ENCODE measurements at regions of chrX and their contacts with region 1.

Region 1: DNA sequence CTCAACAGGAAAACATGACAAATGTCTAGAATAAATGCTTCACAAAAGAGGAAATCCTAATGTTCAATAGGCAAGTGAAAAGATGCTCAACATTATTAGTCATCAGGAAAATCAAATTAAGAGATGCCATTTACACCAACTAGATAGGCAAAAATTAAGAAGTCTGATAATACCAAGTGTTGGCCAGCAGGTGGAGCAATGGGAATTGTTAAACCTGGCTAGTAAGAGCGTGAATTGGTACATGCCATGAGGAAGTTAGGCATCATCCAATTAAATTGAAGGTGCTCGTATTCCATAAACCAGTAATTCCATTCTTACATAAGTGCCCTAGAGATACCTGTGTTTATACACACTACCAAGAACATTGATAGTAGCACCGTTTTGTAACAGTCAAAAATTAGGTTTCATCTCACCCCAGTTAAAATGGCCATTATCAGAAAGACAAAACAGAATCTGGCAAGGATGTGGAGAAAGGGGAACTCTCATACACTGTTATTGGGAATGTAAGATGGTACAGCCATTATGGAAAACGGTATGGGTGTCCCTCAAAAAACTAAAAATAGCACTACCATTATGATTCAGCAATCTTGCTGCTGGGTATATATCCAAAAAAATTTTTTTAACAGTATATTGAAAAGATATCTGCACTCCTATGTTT is 14.0 kb upstream of the ZCCHC18 start:
- DNase-seq: peak; percentile 29 to 68 (median 55)
- H3K4me3 ChIP-seq: no peak overlapping the region
- H3K4me3 Mint-ChIP-seq: peak overlapping the region in 1 of 7 donors; percentile 29
- H3K27ac ChIP-seq: no peak overlapping the region
- H3K27ac Mint-ChIP-seq: peak overlapping the region in 3 of 8 donors; percentile 44 to 67 (median 59)
- H3K4me1 ChIP-seq: no peaks in the 10 kb centered on the region
- H3K4me1 Mint-ChIP-seq: peaks cover 0 to 7% (median 3%) of the 10 kb centered on the region in 3 donors
- H3K27me3 ChIP-seq: no peaks in the 10 kb centered on the region
- H3K27me3 Mint-ChIP-seq: peaks cover 0 to 7% of the 10 kb centered on the region in 2 donors

Region 2: GRCh38 chrX:104084534-104085277 is 13.6 kb before region 1 on chrX:
- CTCF ChIA-PET with region 1: no interaction called
- POLR2A ChIA-PET with region 1: no interaction called
- DNase-seq: no peak
- H3K4me3 ChIP-seq: no peak overlapping the region
- H3K4me3 Mint-ChIP-seq: no peak overlapping the region
- H3K27ac ChIP-seq: no peak overlapping the region
- H3K27ac Mint-ChIP-seq: no peak overlapping the region
- H3K4me1 ChIP-seq: no peaks in the 10 kb centered on the region
- H3K4me1 Mint-ChIP-seq: no peaks in the 10 kb centered on the region
- H3K27me3 ChIP-seq: no peaks in the 10 kb centered on the region
- H3K27me3 Mint-ChIP-seq: peaks cover 6 to 9% of the 10 kb centered on the region in 2 donors

Region 3: DNA sequence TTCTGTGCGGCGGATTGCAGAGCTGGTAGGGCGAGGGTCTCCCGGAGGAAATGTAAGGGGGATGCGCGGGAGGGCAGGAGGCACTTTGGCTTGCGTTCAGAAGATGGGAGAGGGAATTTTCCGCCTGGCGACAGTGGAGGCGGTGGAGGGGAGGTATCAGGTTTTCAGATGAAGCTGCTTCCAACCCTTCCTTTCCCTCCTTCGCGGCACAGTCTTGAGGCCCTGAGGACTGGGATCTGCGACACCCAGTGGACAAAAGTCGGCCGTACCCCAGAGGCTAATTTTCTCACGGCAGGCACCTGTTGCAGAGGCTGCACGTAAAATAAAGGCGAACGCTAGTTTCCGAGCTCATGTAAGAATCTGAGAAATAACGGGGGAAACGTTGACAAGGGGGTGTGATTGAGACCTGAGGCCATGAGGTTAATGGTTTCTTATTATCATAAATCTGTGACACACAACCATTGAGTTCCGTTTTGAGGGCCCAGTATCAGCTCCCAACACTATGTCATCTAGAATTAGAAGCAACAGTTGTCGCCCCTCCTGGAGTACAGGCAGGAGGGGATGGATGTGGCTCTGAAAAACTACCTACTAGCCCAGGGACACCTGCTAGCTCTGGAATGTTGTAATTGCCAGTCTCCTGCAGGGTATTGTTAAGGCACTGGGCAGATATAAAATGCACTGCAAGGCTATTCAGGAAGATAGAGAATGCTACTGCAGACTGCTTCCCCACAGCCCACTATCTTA is 15.1 kb after region 1 on chrX:
- CTCF ChIA-PET with region 1: interaction called, 36 read pairs
- POLR2A ChIA-PET with region 1: interaction called, 3 read pairs
- DNase-seq: peak; percentile 41 to 73 (median 45)
- H3K4me3 ChIP-seq: peak overlapping the region; percentile 62
- H3K4me3 Mint-ChIP-seq: peak overlapping the region; percentile 88 to 97 (median 93)
- H3K27ac ChIP-seq: peak overlapping the region; percentile 67
- H3K27ac Mint-ChIP-seq: peak overlapping the region; percentile 89 to 97 (median 94)
- H3K4me1 ChIP-seq: peaks cover 35% of the 10 kb centered on the region
- H3K4me1 Mint-ChIP-seq: peaks cover 38 to 59% (median 51%) of the 10 kb centered on the region in 3 donors
- H3K27me3 ChIP-seq: no peaks in the 10 kb centered on the region
- H3K27me3 Mint-ChIP-seq: peaks cover 0 to 12% of the 10 kb centered on the region in 2 donors

Region 4: GRCh38 chrX:104136241-104137019 is 38.1 kb after region 1 on chrX:
- CTCF ChIA-PET with region 1: interaction called, 14 read pairs
- POLR2A ChIA-PET with region 1: interaction called, 3 read pairs
- DNase-seq: peak; percentile 23 to 70 (median 60)
- H3K4me3 ChIP-seq: no peak overlapping the region
- H3K4me3 Mint-ChIP-seq: peak overlapping the region in 1 of 7 donors; percentile 14
- H3K27ac ChIP-seq: no peak overlapping the region
- H3K27ac Mint-ChIP-seq: peak overlapping the region in 1 of 8 donors; percentile 20
- H3K4me1 ChIP-seq: peaks cover 13% of the 10 kb centered on the region
- H3K4me1 Mint-ChIP-seq: peaks cover 22 to 34% (median 30%) of the 10 kb centered on the region in 3 donors
- H3K27me3 ChIP-seq: no peaks in the 10 kb centered on the region
- H3K27me3 Mint-ChIP-seq: peaks cover 0 to 7% of the 10 kb centered on the region in 2 donors